AG04449 (cell line): ENCODE measurements at regions of chr1 and their contacts with region 1.

Region 1: DNA sequence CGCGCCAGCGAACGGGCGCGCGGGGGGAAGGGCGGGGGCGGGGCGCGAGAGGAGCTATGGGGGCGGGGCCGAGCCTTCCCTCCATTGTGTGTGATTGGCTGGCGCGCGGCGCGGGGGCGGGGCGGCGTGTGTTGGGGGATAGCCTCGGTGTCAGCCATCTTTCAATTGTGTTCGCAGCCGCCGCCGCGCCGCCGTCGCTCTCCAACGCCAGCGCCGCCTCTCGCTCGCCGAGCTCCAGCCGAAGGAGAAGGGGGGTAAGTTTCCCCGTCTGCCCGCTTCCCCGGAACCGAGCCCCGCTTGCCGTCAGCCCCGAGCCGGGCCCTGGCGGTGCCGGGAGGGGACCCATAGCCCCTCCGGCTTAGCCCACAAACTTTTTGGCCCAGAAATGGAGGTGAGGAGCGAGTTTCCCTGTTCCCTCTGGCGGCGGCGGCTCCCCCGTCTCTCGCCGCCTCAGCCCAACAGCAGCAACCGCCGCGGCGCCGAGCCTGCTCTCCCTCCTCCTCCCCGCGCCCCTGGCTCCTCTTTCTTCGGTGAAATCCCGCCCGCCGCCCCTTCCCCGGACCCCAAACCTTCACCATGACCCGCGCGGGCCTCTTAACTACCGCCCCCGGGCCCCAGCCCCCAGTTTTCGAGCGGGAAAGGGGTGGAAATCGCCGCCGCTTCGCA is at the start of gene H3-3A:
- DNase-seq: peak; percentile 38
- H3K4me3 ChIP-seq: peak within 1 kb of the TSS; percentile 80
- CTCF ChIP-seq: no peak

Region 2: GRCh38 chr1:225191199-225191753 is 871.4 kb before region 1 on chr1:
- CTCF ChIA-PET with region 1: no interaction called
- POLR2A ChIA-PET with region 1: no interaction called
- DNase-seq: no peak
- H3K4me3 ChIP-seq: no peak overlapping the region
- CTCF ChIP-seq: no peak

Region 3: GRCh38 chr1:225950905-225951497 is 111.7 kb before region 1 on chr1:
- CTCF ChIA-PET with region 1: no interaction called
- POLR2A ChIA-PET with region 1: no interaction called
- DNase-seq: no peak
- H3K4me3 ChIP-seq: no peak overlapping the region
- CTCF ChIP-seq: no peak

Region 4: GRCh38 chr1:226050133-226050532 is 12.6 kb before region 1 on chr1:
- CTCF ChIA-PET with region 1: interaction called, 11 read pairs
- POLR2A ChIA-PET with region 1: interaction called, 7 read pairs
- DNase-seq: no peak
- H3K4me3 ChIP-seq: no peak overlapping the region
- CTCF ChIP-seq: no peak

Region 5: DNA sequence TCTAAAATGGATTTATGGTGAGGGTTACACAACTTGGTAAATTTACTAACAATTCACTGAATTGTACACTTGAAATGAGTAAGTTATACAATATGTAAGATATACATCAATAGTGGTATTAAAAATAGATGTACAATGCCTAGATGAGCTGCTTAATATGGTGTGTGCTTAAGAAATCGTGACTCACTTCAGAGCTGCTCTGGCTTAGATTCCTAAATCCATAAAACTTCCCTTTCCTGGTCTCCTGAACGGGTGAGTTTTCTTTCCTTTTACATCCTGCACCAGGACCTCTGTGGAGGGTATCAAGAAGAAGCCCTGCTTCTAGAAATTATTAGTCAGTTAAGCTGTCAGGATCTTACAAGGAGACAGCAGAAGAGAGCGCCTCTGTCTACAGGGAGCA is 30.3 kb after region 1 on chr1:
- CTCF ChIA-PET with region 1: interaction called, 12 read pairs
- POLR2A ChIA-PET with region 1: no interaction called
- DNase-seq: no peak
- H3K4me3 ChIP-seq: no peak overlapping the region
- CTCF ChIP-seq: no peak

Region 6: DNA sequence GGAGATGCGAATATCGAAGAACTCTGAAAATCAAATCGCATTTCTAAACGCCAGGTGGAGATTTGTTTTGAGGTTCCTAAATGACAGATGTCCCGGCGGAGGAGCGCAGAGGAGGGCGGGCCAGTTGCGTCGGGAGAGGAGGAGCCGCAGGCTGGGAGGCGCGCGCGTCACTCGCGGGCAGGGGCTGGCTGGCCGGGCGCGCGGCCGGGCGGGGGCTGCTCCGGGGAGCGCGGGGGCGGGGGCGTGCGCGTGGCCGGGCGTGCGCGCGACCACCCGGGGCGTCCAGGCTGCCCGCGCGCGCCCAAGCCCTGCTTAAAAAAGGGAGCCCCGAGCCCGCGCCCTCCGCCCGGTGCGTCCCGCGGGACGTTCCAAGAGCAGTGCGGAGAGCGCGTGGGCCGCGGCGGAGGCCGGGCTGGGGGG is 47.1 kb after region 1 on chr1:
- CTCF ChIA-PET with region 1: interaction called, 27 read pairs
- POLR2A ChIA-PET with region 1: interaction called, 3 read pairs
- DNase-seq: no peak
- H3K4me3 ChIP-seq: peak overlapping the region; percentile 56
- CTCF ChIP-seq: no peak

Region 7: DNA sequence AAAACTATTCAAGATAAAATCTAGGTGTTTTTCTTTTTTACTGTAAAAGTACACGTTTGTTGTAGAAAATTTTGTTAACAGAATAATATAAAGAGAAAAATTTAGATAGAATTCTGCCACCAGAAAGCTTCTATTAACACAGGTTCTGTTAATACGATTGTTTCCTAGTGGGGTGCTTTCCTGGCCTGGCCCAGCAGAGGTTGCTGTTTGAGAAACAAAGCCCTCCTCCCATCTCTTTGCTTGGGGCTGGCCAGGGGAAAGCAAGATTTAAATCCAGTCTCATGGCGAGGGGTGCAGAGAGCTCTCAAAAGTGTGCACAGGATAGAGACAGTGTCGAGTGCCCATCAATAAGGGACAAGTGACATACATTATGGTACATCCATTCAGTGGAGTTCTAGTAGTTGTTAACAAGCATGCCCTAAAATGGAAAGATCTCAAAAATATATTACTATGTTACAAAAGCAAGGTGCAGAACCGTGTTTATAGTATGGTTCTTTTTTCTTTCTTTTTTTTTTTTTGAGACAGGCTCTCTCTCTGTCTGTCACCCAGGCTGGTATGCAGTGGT is 138.4 kb after region 1 on chr1:
- CTCF ChIA-PET with region 1: interaction called, 20 read pairs
- POLR2A ChIA-PET with region 1: no interaction called
- DNase-seq: no peak
- H3K4me3 ChIP-seq: no peak overlapping the region
- CTCF ChIP-seq: peak; percentile 26